ENCODE measurements at regions of chr20 and their contacts with region 1.

Region 1: DNA sequence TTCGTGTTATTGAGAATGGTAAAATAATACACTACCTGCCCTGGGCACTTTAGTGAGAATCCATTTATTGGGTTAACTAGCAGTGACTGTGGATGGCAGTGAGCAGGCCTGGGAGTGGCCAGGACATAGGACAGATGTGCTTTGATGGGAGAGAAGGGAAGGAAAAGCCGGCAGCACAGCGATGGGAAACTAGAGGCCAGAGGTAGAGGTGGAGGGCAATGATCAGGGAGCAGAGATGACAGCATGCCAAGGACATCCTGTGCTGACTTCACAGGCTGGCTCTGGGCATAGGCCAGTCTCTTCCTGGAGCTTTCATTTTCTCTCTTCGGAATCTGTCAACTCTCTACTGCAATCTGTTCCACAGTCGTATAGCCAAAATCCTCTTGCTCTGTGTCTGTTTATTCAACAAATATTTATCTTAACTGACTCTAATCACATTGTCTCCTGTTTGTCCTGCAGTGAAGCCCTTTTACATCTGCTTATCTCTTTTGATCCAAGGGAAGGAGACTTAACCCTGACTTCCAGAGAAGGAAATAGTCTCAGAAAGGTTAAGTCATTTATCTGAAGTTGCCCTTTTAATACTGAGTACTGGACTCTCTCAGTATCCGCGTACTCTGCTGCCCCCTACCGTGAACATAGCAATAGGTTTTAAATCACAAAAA is 18.4 kb upstream of the MMP24 start:
- DNase-seq: peak in 3 of 4 donors; percentile 75 to 86 (median 76)
- ATAC-seq: peak; percentile 100
- H3K4me3 ChIP-seq: no peak overlapping the region
- H3K27ac ChIP-seq: peak overlapping the region; percentile 39 to 42
- H3K4me1 ChIP-seq: peaks cover 0 to 12% of the 10 kb centered on the region in 2 donors
- H3K27me3 ChIP-seq: no peaks in the 10 kb centered on the region
- CTCF ChIP-seq: peak; percentile 59 to 73

Region 2: DNA sequence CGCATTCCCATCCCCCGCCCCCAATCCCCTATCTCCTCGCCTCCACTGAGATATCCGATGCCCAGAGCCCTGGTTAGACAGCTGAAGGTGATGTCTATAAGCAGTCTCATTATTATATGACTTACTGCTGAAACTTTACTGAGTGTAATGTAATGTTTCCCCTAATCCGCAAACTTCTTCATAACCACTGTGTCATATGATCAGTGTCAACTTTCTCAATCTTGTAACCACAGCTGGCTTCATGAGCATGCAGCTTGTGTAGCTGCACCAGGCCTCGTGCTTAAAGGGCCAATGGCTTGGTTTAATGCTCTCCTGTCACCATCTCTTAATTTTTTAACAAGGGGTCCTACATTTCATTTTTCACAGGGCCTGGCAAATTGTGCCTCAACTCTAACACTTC is 958.8 kb before region 1 on chr20:
- intact Hi-C with region 1: no loop called
- DNase-seq: peak in 2 of 4 donors; percentile 13 to 52
- ATAC-seq: peak; percentile 87
- H3K4me3 ChIP-seq: no peak overlapping the region
- H3K27ac ChIP-seq: no peak overlapping the region
- H3K4me1 ChIP-seq: peaks cover 0 to 22% of the 10 kb centered on the region in 2 donors
- H3K27me3 ChIP-seq: no peaks in the 10 kb centered on the region
- CTCF ChIP-seq: no peak

Region 3: DNA sequence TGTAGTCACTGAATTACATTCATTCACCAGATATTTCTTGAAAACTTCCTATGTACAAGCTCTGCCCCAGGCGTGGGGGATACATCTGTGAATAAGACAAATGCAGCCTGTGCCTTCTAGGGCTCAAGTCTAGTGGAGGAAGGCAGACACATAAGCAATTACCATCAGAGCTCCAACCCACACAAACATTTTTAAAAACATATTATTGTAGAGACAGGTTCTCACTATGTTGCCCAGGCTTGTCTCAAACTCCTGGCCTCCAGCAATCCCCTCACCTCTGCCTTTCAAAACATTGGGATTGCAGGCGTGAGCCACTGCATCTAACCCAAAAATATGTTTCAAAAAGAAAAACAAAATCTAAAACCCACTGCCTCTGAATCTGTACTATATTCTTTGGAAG is 105.6 kb before region 1 on chr20:
- intact Hi-C with region 1: no loop called
- DNase-seq: no peak
- ATAC-seq: no peak
- H3K4me3 ChIP-seq: no peak overlapping the region
- H3K27ac ChIP-seq: no peak overlapping the region
- H3K4me1 ChIP-seq: no peaks in the 10 kb centered on the region
- H3K27me3 ChIP-seq: no peaks in the 10 kb centered on the region
- CTCF ChIP-seq: no peak

Region 4: GRCh38 chr20:35146920-35147574 is 61.0 kb before region 1 on chr20 and contains the start of gene EDEM2:
- intact Hi-C with region 1: loop called in 1 of 2 experiments (anchors 5 kb)
- DNase-seq: peak; percentile 93 to 98 (median 96)
- ATAC-seq: peak; percentile 92
- H3K4me3 ChIP-seq: peak within 1 kb of the TSS; percentile 80 to 88
- H3K27ac ChIP-seq: peak within 1 kb of the TSS; percentile 86 to 88
- H3K4me1 ChIP-seq: peaks cover 0 to 39% of the 10 kb centered on the region in 2 donors
- H3K27me3 ChIP-seq: no peaks in the 10 kb centered on the region
- CTCF ChIP-seq: no peak
- polyA plus RNA-seq, gene EDEM2: 17.6 to 22.7 (median 20.3) TPM

Region 5: GRCh38 chr20:35318502-35319157 is 110.5 kb after region 1 on chr20:
- intact Hi-C with region 1: no loop called
- DNase-seq: peak in 1 of 4 donors; percentile 39
- ATAC-seq: peak; percentile 82
- H3K4me3 ChIP-seq: no peak overlapping the region
- H3K27ac ChIP-seq: peak overlapping the region; percentile 10 to 42
- H3K4me1 ChIP-seq: peaks cover 9 to 11% of the 10 kb centered on the region in 2 donors
- H3K27me3 ChIP-seq: no peaks in the 10 kb centered on the region
- CTCF ChIP-seq: no peak